H1 (cell line): ENCODE measurements at regions of chr3 and their contacts with region 1.

Region 1: GRCh38 chr3:28328188-28329151 is 20.1 kb upstream of the ZCWPW2 start:
- DNase-seq: no peak
- H3K4me3 ChIP-seq: no peak overlapping the region
- H3K27ac ChIP-seq: no peak overlapping the region
- H3K4me1 ChIP-seq: no peaks in the 10 kb centered on the region
- H3K27me3 ChIP-seq: no peaks in the 10 kb centered on the region
- CTCF ChIP-seq: peak in 2 of 3 experiments; percentile 10 to 43; a peak in 2 of 4 replicates
- EP300 ChIP-seq: no peak
- POLR2A ChIP-seq: no peak
- RAD21 ChIP-seq: peak in 1 of 2 experiments; percentile 68

Region 2: GRCh38 chr3:27721717-27722542 is 606.5 kb before region 1 on chr3 and contains the start of gene EOMES:
- CTCF ChIA-PET with region 1: interaction called, 16 read pairs
- POLR2A ChIA-PET with region 1: no interaction called
- DNase-seq: peak in 1 of 2 experiments; percentile 84
- H3K4me3 ChIP-seq: peak within 1 kb of the TSS; percentile 23 to 64 (median 50)
- H3K27ac ChIP-seq: no peak within 1 kb of the TSS
- H3K4me1 ChIP-seq: peaks cover 10 to 36% (median 16%) of the 10 kb centered on the region in 4 experiments
- H3K27me3 ChIP-seq: peaks cover 74 to 100% (median 89%) of the 10 kb centered on the region in 4 experiments
- CTCF ChIP-seq: peak; percentile 25 to 63 (median 32)
- EP300 ChIP-seq: peak in 1 of 2 experiments; percentile 78; a peak in 1 of 3 replicates
- POLR2A ChIP-seq: 0 out of 3 replicates have a peak, but pooled peaks of 1 of the 2 experiments have one; percentile 4
- RAD21 ChIP-seq: peak; percentile 45 to 64
- total RNA-seq, gene EOMES: 0.47 and 0.50 TPM in 2 replicates

Region 3: GRCh38 chr3:28308196-28308595 is 20.3 kb before region 1 on chr3:
- CTCF ChIA-PET with region 1: interaction called, 11 read pairs
- POLR2A ChIA-PET with region 1: no interaction called
- DNase-seq: no peak
- H3K4me3 ChIP-seq: no peak overlapping the region
- H3K27ac ChIP-seq: no peak overlapping the region
- H3K4me1 ChIP-seq: no peaks in the 10 kb centered on the region
- H3K27me3 ChIP-seq: no peaks in the 10 kb centered on the region
- CTCF ChIP-seq: no peak
- EP300 ChIP-seq: no peak
- POLR2A ChIP-seq: no peak
- RAD21 ChIP-seq: no peak

Region 4: GRCh38 chr3:28317438-28318022 is 10.9 kb before region 1 on chr3:
- CTCF ChIA-PET with region 1: interaction called, 17 read pairs
- POLR2A ChIA-PET with region 1: no interaction called
- DNase-seq: no peak
- H3K4me3 ChIP-seq: no peak overlapping the region
- H3K27ac ChIP-seq: no peak overlapping the region
- H3K4me1 ChIP-seq: no peaks in the 10 kb centered on the region
- H3K27me3 ChIP-seq: no peaks in the 10 kb centered on the region
- CTCF ChIP-seq: peak in 2 of 3 experiments; percentile 52 to 61; a peak in 3 of 4 replicates
- EP300 ChIP-seq: no peak
- POLR2A ChIP-seq: no peak
- RAD21 ChIP-seq: peak; percentile 52 to 59

Region 5: DNA sequence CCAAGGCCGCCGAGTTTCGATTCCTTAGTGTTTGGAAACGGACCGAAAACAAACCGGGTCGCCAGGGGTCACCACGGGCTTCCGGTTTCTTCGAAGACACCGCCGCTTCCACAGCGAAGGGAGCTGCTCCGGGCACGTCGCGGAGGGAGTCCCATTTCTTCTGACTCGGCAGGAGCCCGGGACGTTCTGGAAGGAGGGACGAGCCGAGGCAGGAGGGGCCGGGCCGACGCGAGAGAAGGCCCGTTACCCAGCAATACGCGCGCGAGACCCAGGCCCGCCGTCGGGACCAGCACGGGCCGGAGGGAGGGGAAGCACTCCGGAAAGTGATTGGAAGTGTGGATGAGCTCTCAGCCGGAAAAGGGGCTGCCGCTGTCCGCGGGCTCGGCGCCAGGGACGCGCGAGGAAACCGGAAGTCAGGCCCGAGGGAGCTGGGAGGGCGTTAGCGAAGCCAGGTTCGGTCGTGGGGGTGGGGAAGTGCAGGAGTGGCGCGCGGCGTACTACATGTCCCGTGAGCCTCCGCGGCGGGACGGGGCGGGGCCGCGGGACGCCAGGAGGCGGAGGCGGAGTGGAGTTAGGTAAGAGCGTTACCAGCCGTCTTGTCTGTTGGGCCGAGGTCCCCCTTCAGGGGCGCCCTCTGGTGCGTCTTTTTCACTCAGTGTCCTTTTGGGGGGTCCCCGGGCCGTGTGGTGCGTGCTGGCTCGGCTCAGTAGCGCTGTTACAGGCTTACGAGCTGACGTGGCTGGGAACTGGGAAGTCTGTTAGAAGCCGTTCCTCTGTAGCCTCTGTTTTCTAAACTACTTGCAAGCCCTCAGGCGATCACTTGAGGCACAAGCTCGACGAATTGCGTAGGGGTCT is 20.4 kb after region 1 on chr3 and contains the starts of genes AZI2 and ZCWPW2:
- CTCF ChIA-PET with region 1: no interaction called
- POLR2A ChIA-PET with region 1: no interaction called
- DNase-seq: peak; percentile 80 to 93
- H3K4me3 ChIP-seq: peak within 1 kb of the TSS; percentile 81 to 96 (median 84)
- H3K27ac ChIP-seq: peak within 1 kb of the TSS; percentile 97
- H3K4me1 ChIP-seq: no peaks in the 10 kb centered on the region; a peak in 2 of 7 replicates
- H3K27me3 ChIP-seq: no peaks in the 10 kb centered on the region
- CTCF ChIP-seq: peak; percentile 8 to 30 (median 25)
- EP300 ChIP-seq: no peak
- POLR2A ChIP-seq: peak; percentile 61 to 89
- RAD21 ChIP-seq: peak; percentile 21 to 23; a peak in 3 of 4 replicates
- total RNA-seq, gene AZI2: 36.1 and 39.2 TPM in 2 replicates
- total RNA-seq, gene ZCWPW2: 0.33 and 0.39 TPM in 2 replicates